Panc1 (cell line): ENCODE measurements at regions of chr1 and their contacts with region 1.

Region 1: DNA sequence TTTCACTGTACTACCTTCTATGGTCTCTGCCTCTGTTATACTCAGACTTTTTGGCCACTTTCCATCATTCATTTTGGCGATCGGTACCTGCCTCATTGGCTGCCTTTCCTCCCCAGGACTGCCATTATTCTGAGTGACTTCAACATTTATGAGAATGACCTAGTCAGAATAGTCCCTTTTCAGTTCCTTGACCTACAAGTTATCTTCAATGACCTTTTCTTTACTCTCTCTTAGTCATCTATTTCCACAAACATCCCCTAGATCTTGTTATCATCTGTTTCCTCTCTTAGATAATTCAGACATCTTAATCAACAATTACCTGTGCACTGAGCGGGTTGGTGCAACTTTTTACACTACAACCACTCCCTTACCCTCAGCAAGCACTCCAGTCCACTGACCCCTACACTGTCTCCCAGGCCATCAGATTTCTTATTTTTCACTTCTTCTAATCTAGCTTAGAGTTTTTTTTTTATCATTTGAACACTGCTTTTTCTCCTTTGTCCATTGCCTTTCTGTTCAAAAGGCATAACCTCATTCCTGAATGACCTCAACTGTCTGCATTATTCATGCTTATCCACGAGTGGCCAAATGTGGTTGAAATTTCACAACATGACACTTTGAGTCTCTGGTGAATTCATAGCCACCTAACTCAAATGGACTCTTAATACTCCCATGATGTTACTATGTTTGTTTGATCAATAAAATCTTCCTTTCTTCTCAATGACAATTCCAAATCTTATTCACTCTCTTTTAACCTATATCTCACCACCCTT is 112.7 kb downstream of the HMCN1 start:
- DNase-seq: no peak
- ATAC-seq: no peak
- H3K4me3 ChIP-seq: no peak overlapping the region
- H3K27ac ChIP-seq: no peak overlapping the region
- H3K4me1 ChIP-seq: no peaks in the 10 kb centered on the region
- H3K27me3 ChIP-seq: no peaks in the 10 kb centered on the region; the same call in 1 of the 2 replicates
- CTCF ChIP-seq: no peak

Region 2: DNA sequence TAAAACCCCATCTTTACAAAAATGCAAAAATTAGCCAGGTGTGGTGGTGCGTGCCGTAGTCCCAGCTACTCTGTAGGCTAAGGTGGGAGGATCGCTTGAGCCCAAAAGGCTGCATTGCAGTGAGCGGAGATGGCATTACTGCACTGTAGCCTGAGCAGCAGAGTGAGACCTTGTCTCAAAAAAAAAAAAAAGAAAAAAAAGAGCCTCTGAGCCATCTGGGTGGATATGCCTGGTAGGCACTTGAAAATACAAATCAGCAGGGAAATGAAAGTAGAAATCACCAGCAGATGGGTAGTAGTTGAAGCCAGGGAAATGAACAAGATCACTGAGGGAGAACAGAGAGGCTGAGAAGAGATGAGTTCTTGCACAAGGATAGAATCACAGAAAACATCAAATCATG is 243.7 kb before region 1 on chr1:
- CTCF ChIA-PET with region 1: no interaction called
- POLR2A ChIA-PET with region 1: no interaction called
- in situ Hi-C with region 1: no loop called
- intact Hi-C with region 1: loop called (anchors 5 kb)
- DNase-seq: no peak
- ATAC-seq: no peak
- H3K4me3 ChIP-seq: no peak overlapping the region
- H3K27ac ChIP-seq: no peak overlapping the region; the same call in 1 of the 2 replicates
- H3K4me1 ChIP-seq: no peaks in the 10 kb centered on the region
- H3K27me3 ChIP-seq: no peaks in the 10 kb centered on the region
- CTCF ChIP-seq: no peak